ENCODE measurements at regions of chr3 and their contacts with region 1.

Region 1: GRCh38 chr3:128408693-128409623 is 57.7 kb downstream of the DNAJB8 start:
- DNase-seq: no peak
- H3K4me3 ChIP-seq: no peak overlapping the region
- CTCF ChIP-seq: peak; percentile 37

Region 2: DNA sequence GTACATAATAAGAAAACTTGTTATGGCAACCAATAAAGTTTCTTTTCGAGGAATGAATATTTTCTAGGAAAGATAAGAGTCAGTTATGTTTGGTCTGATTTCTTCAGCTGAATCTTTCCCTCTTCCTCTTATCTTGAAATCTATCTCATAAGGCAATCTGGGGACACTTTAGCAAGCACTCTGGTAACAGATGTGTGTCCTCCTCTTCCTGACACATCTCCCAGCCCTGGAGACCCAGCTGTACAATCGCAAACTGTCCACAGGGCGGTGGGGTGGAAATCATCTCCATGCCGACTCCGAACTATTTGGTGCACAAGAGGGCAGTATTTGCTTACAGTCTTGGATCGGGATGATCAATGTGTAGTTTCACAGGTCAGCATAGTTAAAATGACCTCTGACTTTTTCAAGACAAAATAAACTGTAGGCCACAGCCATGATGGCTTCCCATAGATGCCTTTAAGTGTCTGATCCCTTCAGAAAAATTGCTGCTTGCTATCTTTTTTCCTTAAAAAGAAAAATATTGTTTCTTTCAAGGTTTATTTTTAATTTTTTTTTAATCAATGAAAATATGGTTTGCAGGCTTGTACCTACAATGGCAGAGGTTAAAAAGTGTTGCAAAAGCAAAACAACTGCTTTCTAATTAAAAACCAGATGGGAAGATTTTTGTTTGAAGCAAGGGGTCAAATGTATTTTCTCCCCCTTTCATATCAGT is 238.0 kb before region 1 on chr3:
- in situ Hi-C with region 1: loop called (anchors 10 kb)
- DNase-seq: peak; percentile 69
- H3K4me3 ChIP-seq: no peak overlapping the region
- CTCF ChIP-seq: peak; percentile 98

Region 3: DNA sequence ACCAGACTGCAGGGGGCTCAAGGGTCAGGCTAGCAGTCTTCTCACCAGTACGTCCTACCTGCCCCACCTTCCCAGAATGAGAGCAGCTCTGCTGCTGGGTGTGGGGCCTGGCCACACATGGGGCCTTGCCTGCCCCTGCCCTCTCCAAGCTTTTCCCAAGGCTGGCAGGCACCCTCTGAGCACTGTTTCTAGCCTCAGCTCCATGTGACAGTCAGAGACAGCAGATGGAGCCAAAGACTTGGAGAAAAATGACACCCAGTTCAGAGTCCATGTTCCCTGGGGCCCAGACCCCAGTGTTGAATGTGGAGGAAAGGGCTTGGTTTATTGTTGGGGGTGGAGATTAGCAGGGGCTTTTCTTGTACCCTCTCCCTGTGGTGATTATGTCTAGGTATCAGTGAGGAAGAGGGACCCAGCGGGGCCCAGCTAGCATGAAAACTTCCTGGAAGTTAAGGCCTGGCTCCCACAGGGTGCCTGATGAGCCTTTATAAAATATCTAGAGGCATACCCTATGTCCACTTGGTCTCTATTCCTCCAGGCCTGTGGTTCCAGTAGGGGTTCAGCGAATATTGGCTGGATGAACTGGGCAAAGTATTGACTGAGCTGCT is 101.8 kb before region 1 on chr3:
- in situ Hi-C with region 1: loop called (anchors 5 kb)
- DNase-seq: no peak
- H3K4me3 ChIP-seq: no peak overlapping the region
- CTCF ChIP-seq: no peak

Region 4: DNA sequence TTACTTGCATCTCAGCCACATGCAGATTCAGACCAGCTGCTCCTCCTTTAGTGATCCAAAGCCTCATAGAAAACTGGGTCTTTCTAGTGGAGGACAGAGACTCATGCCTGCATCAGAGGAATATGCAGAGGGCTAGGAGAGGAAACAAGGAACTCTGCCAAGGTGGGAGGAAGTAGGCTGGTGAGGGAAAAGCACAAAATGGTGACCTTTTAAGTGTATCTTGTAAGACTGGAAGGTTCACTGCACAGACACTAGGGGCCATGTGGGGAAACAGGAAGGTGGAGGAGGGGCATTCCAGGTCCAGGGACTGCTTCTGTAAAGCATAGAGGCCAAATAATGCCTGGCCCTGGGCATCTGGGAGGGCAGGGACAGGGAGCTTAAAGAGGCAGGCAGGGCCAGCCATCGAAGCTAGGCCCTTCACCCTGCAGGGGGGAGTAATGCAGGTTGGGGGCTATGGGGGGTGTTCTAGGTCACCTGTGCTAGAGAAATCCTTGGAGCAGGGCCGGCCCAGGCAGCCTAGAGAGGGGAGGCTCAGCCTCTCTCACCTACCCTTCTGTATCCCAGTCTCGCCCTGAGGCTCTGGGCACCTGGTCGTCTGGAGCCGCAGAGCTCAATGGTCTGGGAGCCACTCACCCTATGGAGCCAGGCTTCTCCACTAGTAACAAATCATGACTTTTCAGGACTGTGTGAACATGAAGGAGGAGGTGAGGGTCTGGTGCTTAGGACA is 60.0 kb before region 1 on chr3:
- in situ Hi-C with region 1: no loop called
- DNase-seq: no peak
- H3K4me3 ChIP-seq: no peak overlapping the region
- CTCF ChIP-seq: no peak

Region 5: GRCh38 chr3:128464188-128464587 is 55.2 kb after region 1 on chr3:
- in situ Hi-C with region 1: no loop called
- DNase-seq: no peak
- H3K4me3 ChIP-seq: no peak overlapping the region
- CTCF ChIP-seq: no peak

Measured in astrocyte of the cerebellum (primary cell).